Left ventricle myocardium superior (tissue), 1 donor: ENCODE measurements at regions of chr4 and their contacts with region 1.

Region 1: GRCh38 chr4:155512817-155513216 is 136.1 kb upstream of the MAP9 start:
- DNase-seq: no peak
- ATAC-seq: peak; percentile 67

Region 2: DNA sequence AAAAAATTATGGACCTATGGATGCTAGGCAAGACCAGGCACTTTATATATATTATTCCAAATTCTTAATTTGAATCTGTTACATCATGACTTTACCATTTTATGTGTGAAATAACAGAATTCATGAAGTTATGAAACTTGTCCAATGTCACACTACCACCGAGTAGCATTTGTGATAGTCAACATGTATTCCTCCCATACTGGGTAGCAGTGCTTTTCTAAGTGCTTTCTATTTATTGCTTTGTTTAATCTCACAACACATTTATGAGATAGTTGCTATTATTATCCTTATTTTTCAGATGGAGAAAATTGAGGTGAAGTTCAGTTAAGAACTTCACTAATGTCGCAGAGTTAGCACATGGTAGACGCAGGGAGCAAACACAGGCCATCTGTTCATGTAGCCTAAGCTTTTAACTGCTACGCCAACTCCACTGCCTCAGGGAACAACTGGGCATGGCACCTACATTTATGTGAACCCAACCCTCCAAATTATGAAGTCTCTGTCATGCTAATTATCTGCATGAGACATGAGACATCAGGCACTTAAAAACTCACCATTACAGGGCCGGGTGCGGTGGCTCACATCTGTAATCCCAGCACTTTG is 174.7 kb after region 1 on chr4:
- intact Hi-C with region 1: loop called (anchors 10 kb)
- DNase-seq: no peak
- ATAC-seq: peak; percentile 70